WTC11 (cell line): ENCODE measurements at regions of chrX and their contacts with region 1.

Region 1: GRCh38 chrX:76279000-76279399 is 106.1 kb downstream of the PBDC1 start:
- DNase-seq: peak; percentile 47
- ATAC-seq: peak; percentile 82
- H3K4me3 Mint-ChIP-seq: no peak overlapping the region
- H3K27ac Mint-ChIP-seq: no peak overlapping the region
- H3K4me1 Mint-ChIP-seq: 0 out of 2 replicates have a peak, but pooled peaks cover 3% of the 10 kb centered on the region
- H3K27me3 Mint-ChIP-seq: no peaks in the 10 kb centered on the region
- CTCF ChIP-seq: 0 out of 2 replicates have a peak, but pooled peaks have one; percentile 25

Region 2: DNA sequence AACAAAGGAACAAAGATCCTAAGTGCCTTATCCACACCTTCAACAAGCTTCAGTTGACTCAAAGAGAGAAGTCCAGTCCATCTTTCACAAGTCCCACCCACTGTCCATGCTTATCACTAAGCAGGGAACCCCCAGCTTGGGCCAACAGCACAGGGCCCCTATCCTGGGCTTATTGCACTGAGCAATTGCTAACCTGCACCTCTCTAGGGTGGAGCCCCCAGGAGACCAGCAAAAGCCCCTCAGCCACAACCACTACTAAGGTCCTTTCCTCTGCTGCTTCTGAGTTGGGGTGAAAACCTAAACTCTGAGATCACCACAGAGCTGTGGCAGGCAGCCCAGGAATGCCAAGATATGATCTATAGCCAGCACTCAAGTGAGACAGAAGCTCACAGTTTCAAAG is 202.9 kb before region 1 on chrX:
- CTCF ChIA-PET with region 1: no interaction called
- POLR2A ChIA-PET with region 1: no interaction called
- DNase-seq: no peak
- ATAC-seq: no peak
- H3K4me3 Mint-ChIP-seq: no peak overlapping the region
- H3K27ac Mint-ChIP-seq: no peak overlapping the region
- H3K4me1 Mint-ChIP-seq: no peaks in the 10 kb centered on the region
- H3K27me3 Mint-ChIP-seq: no peaks in the 10 kb centered on the region
- CTCF ChIP-seq: no peak

Region 3: GRCh38 chrX:76253432-76253831 is 25.6 kb before region 1 on chrX:
- CTCF ChIA-PET with region 1: no interaction called
- POLR2A ChIA-PET with region 1: no interaction called
- DNase-seq: peak; percentile 28
- ATAC-seq: peak; percentile 92
- H3K4me3 Mint-ChIP-seq: no peak overlapping the region
- H3K27ac Mint-ChIP-seq: no peak overlapping the region
- H3K4me1 Mint-ChIP-seq: no peaks in the 10 kb centered on the region
- H3K27me3 Mint-ChIP-seq: peaks cover 9% of the 10 kb centered on the region
- CTCF ChIP-seq: 0 out of 2 replicates have a peak, but pooled peaks have one; percentile 18

Region 4: DNA sequence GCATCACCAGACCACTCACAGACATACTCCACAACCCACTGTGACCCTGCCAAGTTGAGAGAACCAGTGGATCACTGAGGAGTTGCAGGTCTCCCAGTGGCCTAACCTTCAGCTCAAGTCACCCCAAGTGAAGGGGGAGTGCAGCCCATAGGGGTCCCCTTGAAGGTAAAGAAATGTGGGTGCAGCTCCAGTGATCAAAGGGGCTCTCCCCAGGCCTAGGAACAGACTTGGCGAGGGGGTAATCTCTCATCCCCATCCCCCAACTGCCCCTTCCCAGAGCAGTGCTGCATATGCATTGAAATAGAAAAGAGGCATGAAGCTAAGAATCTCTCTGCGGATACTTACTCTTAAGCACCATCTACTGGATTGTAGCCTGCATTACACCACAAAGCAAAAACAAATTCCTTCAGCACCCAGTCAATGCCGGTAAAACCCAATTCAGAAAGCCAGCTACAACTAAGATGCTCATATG is 175.5 kb after region 1 on chrX:
- CTCF ChIA-PET with region 1: interaction called, 36 read pairs
- POLR2A ChIA-PET with region 1: interaction called, 3 read pairs
- DNase-seq: peak; percentile 12
- ATAC-seq: peak; percentile 84
- H3K4me3 Mint-ChIP-seq: no peak overlapping the region; the same call in 1 of the 2 replicates
- H3K27ac Mint-ChIP-seq: peak overlapping the region; percentile 83; the same call in 1 of the 2 replicates
- H3K4me1 Mint-ChIP-seq: peaks cover 39% of the 10 kb centered on the region
- H3K27me3 Mint-ChIP-seq: no peaks in the 10 kb centered on the region
- CTCF ChIP-seq: no peak

Region 5: GRCh38 chrX:76538860-76539259 is 259.9 kb after region 1 on chrX:
- CTCF ChIA-PET with region 1: interaction called, 16 read pairs
- POLR2A ChIA-PET with region 1: interaction called, 3 read pairs
- DNase-seq: peak; percentile 35
- ATAC-seq: no peak
- H3K4me3 Mint-ChIP-seq: no peak overlapping the region
- H3K27ac Mint-ChIP-seq: no peak overlapping the region
- H3K4me1 Mint-ChIP-seq: peaks cover 4% of the 10 kb centered on the region; the same call in 1 of the 2 replicates
- H3K27me3 Mint-ChIP-seq: no peaks in the 10 kb centered on the region; the same call in 1 of the 2 replicates
- CTCF ChIP-seq: no peak